ENCODE measurements at regions of chr14 and their contacts with region 1.

Region 1: GRCh38 chr14:92039719-92040430 is at the start of gene TRIP11:
- DNase-seq: peak; percentile 94 to 95
- ATAC-seq: peak; percentile 98 to 99 (median 99)
- H3K4me3 ChIP-seq: peak within 1 kb of the TSS; percentile 63 to 97 (median 80)
- H3K27ac ChIP-seq: peak within 1 kb of the TSS; percentile 88 to 100 (median 96)
- H3K4me1 ChIP-seq: peaks cover 7 to 52% (median 43%) of the 10 kb centered on the region in 9 donors
- H3K27me3 ChIP-seq: no peaks in the 10 kb centered on the region
- CTCF ChIP-seq: no peak
- total RNA-seq, gene TRIP11: 46.5 to 73.3 (median 59.7) TPM

Region 2: DNA sequence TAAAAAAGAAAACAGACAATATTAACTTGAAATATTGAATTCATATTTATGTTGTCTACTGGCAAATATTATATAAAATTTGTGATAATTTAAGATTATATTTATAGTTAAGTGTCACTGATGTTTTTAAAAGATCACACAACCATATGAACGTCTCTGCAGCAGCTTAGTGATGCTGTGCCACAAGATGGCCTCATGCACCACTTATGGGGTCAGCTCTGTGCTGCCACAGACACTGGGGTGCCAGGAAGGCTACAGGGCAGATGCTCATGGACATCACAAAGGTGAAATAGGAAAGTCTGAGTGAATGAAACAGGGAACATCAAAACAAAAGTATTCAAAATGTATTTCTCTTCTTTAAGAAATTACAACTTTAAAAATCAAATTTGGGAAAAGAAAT is 53.4 kb after region 1 on chr14:
- intact Hi-C with region 1: loop called in 1 of 10 experiments (anchors 10 kb)
- DNase-seq: no peak
- ATAC-seq: no peak
- H3K4me3 ChIP-seq: no peak overlapping the region
- H3K27ac ChIP-seq: no peak overlapping the region
- H3K4me1 ChIP-seq: peaks cover 0 to under 1% (median 0%) of the 10 kb centered on the region in 9 donors
- H3K27me3 ChIP-seq: no peaks in the 10 kb centered on the region
- CTCF ChIP-seq: no peak

Region 3: DNA sequence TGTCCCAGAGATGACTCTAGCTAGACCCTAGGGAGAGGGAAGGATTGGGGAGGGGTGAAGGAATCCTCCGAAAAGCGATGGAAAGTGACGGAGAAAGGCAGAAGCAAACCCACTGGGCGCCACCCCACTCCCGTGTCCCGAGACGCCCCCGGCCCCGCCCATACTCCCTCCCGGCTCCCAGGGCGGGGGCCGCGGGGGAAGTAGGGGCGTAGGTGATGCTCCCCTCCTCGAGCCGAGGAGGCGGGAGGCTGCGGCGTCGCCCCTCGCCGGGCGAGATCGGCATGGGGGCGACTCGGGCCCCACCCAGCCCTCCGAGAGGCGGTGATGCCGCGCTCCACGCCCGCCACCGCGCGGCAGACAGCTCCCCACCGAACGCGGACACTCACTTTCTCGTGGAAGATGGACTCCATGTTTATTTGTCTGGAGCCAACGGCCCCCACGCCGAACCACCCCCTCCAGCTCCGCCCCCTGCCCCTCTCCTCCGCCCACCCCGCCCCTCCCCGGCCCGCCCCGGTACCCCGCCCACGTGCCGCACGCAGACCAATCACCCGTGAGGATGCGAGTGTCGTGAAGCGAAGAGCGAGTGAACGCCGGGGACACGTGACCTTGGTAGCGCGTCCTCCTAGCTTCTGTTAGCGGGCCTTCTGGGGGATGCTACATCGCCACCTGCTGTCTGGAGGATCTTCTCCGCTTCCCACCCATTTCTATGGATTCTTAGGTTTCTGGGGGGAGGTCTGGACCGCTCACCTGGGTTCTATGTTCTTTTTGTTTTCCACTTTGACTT is 66.5 kb after region 1 on chr14 and contains the start of gene ATXN3:
- intact Hi-C with region 1: loop called in 2 of 10 experiments (anchors 5 to 10 kb)
- DNase-seq: peak; percentile 96 to 98
- ATAC-seq: peak; percentile 94 to 97 (median 96)
- H3K4me3 ChIP-seq: peak within 1 kb of the TSS; percentile 69 to 98 (median 92)
- H3K27ac ChIP-seq: peak within 1 kb of the TSS; percentile 93 to 99 (median 96)
- H3K4me1 ChIP-seq: peaks cover 3 to 46% (median 32%) of the 10 kb centered on the region in 9 donors
- H3K27me3 ChIP-seq: no peaks in the 10 kb centered on the region
- CTCF ChIP-seq: peak; percentile 67 to 92 (median 75)
- total RNA-seq, gene ATXN3: 12.3 to 20.5 (median 17.0) TPM

Region 4: DNA sequence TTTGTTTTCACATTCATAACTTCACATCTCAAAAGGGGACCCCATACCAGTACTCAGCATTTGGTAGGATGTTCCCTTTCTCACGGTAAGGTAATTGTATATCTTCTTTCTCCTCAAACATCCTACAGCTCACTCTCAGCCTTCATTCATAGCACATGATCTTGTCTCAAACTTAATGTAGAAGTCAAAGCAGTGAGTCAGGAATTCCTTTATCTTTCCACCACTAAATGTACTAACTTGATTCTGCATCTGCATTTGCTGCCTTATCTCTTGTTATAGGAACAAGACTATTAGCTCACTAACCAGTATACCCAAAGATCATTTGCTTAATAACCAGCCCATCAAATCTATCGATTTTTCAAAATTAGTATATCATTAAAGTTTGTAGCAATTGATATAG is 104.8 kb after region 1 on chr14:
- intact Hi-C with region 1: no loop called
- DNase-seq: no peak
- ATAC-seq: no peak
- H3K4me3 ChIP-seq: no peak overlapping the region
- H3K27ac ChIP-seq: no peak overlapping the region
- H3K4me1 ChIP-seq: no peaks in the 10 kb centered on the region
- H3K27me3 ChIP-seq: no peaks in the 10 kb centered on the region
- CTCF ChIP-seq: no peak

Measured in heart right ventricle (tissue), 16 donors.